CD14-positive monocyte (primary cell): ENCODE measurements at regions of chr5 and their contacts with region 1.

Region 1: DNA sequence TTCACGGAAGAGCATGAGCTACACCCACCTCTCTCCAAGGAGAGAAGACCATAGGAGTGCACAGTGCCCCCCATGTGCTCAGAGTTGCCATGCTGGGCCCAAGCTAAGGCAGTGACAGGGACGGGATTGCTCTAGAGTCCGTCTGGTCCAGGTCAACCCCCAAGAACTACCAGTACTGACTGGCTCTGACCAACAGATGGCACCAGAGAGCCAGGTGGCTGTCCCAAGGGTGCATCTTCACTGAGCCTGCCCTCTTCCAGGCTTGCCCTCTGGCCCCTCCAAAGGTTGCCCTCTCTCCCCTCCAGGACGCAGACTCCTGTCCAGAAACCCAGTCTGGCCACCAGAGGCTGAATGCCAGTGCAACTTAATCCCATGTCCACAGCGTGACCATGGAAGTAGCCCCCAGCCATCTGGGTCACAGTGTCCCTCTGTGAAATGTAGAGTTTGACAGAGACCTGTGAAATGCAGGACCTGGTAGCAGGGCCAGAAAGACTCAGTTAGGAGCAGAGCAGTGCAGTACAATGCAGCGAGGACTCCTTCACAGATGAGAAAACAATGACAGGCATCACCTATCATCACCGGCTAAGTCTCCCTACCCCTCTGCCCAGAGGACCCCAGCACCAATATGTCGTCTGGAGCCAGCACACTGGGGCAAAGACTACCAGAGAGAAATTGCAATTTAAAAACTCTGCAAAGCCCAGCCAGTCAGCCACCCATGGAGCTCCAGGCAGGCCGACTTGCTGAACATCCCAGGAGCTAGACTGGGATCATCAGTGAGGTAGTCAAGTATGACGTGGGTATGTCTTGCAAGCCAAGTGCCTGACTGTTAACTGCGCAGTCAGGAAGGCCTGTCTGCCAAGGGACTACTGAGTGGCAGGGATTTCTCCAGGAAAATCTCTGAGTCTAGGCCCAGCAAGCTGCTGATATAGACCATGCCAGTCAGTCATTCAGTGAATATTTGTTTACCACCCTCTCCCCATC is 7.7 kb upstream of the SKP1 start:
- DNase-seq: peak; percentile 66 to 78 (median 74)
- H3K4me3 ChIP-seq: no peak overlapping the region
- H3K4me3 Mint-ChIP-seq: no peak overlapping the region
- H3K27ac ChIP-seq: no peak overlapping the region
- H3K27ac Mint-ChIP-seq: peak overlapping the region in 1 of 7 donors; percentile 34
- H3K4me1 ChIP-seq: no peaks in the 10 kb centered on the region
- H3K4me1 Mint-ChIP-seq: peaks cover 8% of the 10 kb centered on the region
- H3K27me3 ChIP-seq: no peaks in the 10 kb centered on the region
- H3K27me3 Mint-ChIP-seq: peaks cover 0 to 10% (median 5%) of the 10 kb centered on the region in 3 donors
- CTCF ChIP-seq: peak; percentile 96

Region 2: DNA sequence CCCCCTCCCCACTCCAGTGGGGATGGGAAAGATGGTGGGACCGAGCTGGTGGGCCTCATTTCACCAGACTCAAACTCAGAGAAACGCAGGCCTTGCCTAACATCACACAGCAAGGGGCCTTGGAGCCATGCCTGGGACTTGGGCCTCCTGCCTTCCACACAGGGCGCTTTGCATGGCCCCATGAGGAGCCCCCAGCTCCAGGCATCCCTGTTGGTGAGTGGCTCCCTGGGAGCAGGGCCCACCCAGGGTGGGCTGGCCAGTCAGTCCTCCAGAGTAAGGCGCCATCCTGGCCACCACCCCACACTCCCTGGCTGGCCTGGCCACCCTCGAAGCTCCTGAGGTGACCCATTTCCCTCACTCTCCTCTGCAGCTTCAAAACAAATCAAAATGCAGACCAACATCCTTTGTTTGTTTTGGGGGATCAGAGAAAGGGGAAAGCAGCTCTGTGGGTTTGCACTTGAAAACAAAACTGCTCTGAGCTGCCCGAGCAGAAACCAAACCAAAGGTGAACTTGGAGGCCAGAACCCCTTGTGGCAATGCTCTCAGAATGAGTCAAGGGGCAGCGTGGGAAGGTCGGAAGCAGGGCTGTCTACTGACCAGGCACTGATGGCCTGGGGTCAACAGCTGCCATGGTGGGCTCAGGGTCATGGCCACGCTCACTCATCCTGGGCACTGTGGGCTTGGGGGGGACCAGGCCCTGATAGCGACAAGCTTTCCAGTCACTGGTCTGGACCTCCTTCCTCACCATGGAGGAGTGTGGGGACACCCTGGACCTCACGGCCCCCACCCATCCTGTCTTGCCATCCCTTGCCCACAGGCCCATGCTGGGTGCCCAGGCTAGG is 142.7 kb before region 1 on chr5:
- intact Hi-C with region 1: no loop called
- DNase-seq: no peak
- H3K4me3 ChIP-seq: no peak overlapping the region
- H3K4me3 Mint-ChIP-seq: no peak overlapping the region
- H3K27ac ChIP-seq: no peak overlapping the region
- H3K27ac Mint-ChIP-seq: no peak overlapping the region
- H3K4me1 ChIP-seq: no peaks in the 10 kb centered on the region
- H3K4me1 Mint-ChIP-seq: peaks cover 2% of the 10 kb centered on the region
- H3K27me3 ChIP-seq: no peaks in the 10 kb centered on the region
- H3K27me3 Mint-ChIP-seq: peaks cover 8 to 17% (median 9%) of the 10 kb centered on the region in 3 donors
- CTCF ChIP-seq: no peak

Region 3: DNA sequence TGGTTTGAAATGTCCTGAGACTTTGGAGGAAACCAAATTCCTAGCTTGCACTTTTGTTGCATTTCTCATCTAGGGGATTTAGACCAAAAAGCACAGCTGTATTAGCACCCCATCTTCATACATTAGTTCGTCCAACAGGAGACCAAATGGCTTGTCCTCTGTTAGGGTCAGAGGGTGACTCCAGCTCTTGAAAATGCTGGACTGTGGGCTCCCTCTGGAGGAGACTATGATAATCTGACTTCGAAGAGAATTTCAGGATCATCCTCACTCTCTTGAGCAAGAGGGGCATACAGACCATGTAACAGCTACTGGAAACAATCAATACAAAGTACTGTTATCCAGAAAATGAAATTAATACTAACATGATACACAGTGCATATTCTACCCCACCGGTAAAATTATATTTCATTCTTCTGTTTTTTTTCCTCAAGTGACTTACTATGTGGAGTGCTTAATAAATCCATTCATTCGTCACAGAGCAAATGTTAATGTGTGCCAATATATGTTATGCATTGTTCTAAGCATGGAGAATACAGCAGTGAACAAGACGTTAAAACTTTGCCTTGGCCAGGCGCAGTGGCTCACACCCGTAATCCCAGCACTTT is 105.2 kb after region 1 on chr5:
- intact Hi-C with region 1: loop called (anchors 1 to 5 kb)
- DNase-seq: peak; percentile 71 to 79 (median 73)
- H3K4me3 ChIP-seq: no peak overlapping the region
- H3K4me3 Mint-ChIP-seq: no peak overlapping the region
- H3K27ac ChIP-seq: no peak overlapping the region
- H3K27ac Mint-ChIP-seq: no peak overlapping the region
- H3K4me1 ChIP-seq: no peaks in the 10 kb centered on the region
- H3K4me1 Mint-ChIP-seq: no peaks in the 10 kb centered on the region
- H3K27me3 ChIP-seq: no peaks in the 10 kb centered on the region
- H3K27me3 Mint-ChIP-seq: peaks cover 0 to 9% (median 3%) of the 10 kb centered on the region in 3 donors
- CTCF ChIP-seq: peak; percentile 79

Region 4: DNA sequence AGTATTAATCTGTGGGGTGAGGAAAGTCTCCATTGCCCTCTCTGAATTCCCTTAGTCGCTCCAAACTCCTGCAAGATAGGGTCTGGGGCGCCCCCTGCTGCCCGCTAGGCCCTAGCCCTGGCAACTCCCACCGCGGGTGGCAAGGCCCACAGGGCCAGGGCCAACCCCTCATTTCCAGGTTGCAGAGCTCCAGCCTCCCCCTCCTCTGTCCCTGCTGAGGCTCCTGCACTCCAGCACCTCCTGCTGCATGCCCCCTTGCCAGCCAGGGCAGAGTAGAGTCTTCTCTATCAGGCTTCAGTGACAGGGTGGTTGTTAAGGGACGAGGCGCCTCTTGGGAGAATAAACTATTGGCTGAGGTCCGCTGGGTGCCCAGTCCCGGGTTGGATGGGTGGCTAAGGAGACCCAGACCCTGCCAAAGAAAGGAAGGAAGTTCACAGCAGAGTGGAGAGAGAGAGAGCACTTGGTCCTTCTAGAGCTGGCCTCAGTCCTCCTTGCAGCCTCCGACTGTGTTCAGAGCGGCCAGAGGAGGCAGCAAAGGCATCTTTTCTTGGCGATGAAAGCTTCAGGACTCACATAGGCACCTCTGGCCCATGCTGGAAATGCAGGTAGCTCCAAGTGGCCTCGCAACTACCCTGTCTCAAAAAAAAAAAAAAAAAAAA is 402.6 kb after region 1 on chr5:
- intact Hi-C with region 1: loop called in 1 of 2 experiments (anchors 10 kb)
- DNase-seq: peak; percentile 48 to 69 (median 58)
- H3K4me3 ChIP-seq: no peak overlapping the region
- H3K4me3 Mint-ChIP-seq: peak overlapping the region; percentile 34 to 72
- H3K27ac ChIP-seq: no peak overlapping the region
- H3K27ac Mint-ChIP-seq: no peak overlapping the region
- H3K4me1 ChIP-seq: peaks cover 4 to 5% of the 10 kb centered on the region in 2 donors
- H3K4me1 Mint-ChIP-seq: peaks cover 6% of the 10 kb centered on the region
- H3K27me3 ChIP-seq: no peaks in the 10 kb centered on the region
- H3K27me3 Mint-ChIP-seq: peaks cover 0 to 4% (median 1%) of the 10 kb centered on the region in 3 donors
- CTCF ChIP-seq: peak; percentile 94